ENCODE measurements at regions of chr9 and their contacts with region 1.

Region 1: DNA sequence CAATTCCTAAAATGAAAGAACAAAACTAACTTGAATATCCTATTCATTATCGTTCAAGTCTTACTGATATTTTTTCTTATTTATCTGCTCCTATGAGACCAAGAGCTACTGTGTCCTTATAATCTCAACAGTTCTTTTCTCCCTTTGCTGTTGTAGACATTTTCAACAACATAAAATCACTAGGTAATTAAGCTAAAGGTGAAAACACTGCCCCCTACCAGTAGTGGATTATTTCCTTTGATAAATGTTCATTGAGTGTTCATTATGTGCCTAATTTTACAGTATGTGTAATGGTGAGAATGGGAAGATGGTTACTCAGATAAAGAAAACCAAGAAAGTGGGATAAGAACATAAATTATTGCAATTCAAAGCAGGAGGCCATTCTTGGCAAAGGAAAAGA is 41.4 kb upstream of the PAPPA start:
- DNase-seq: no peak
- ATAC-seq: no peak
- H3K4me3 ChIP-seq: no peak overlapping the region
- H3K27ac ChIP-seq: no peak overlapping the region
- H3K4me1 ChIP-seq: no peaks in the 10 kb centered on the region
- H3K27me3 ChIP-seq: no peaks in the 10 kb centered on the region
- CTCF ChIP-seq: peak in 7 of 9 donors; percentile 5 to 46 (median 30)

Region 2: GRCh38 chr9:115883457-115884329 is 228.5 kb before region 1 on chr9:
- intact Hi-C with region 1: loop called in 8 of 10 experiments (anchors 2 to 10 kb)
- DNase-seq: peak in 1 of 2 donors; percentile 13
- ATAC-seq: peak in 6 of 8 donors; percentile 43 to 81 (median 64)
- H3K4me3 ChIP-seq: no peak overlapping the region
- H3K27ac ChIP-seq: no peak overlapping the region
- H3K4me1 ChIP-seq: no peaks in the 10 kb centered on the region
- H3K27me3 ChIP-seq: no peaks in the 10 kb centered on the region
- CTCF ChIP-seq: peak; percentile 11 to 66 (median 57)

Region 3: GRCh38 chr9:116096853-116097252 is 15.4 kb before region 1 on chr9:
- intact Hi-C with region 1: loop called in 1 of 10 experiments (anchors 1 kb)
- DNase-seq: no peak
- ATAC-seq: no peak
- H3K4me3 ChIP-seq: no peak overlapping the region
- H3K27ac ChIP-seq: no peak overlapping the region
- H3K4me1 ChIP-seq: no peaks in the 10 kb centered on the region
- H3K27me3 ChIP-seq: no peaks in the 10 kb centered on the region
- CTCF ChIP-seq: no peak

Region 4: DNA sequence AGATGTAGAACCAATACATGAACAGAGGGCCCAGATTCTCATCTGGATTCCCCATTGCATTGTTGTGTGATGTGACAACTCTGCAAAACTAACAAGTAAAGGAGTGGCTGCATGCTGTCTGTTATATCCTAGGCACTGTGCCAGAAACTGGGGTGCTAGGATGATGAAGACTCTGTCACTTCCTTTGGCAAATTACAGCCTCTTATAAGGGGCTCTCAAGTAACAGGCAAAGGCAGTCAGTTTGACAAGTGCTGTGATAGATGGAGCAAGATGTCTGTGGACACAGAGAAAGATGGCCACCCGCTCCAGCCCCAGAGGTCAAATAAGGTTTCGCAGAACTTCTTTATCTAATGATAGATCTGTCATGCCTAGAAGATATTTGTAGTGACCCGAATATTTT is 157.0 kb after region 1 on chr9:
- intact Hi-C with region 1: no loop called
- DNase-seq: no peak
- ATAC-seq: no peak
- H3K4me3 ChIP-seq: no peak overlapping the region
- H3K27ac ChIP-seq: no peak overlapping the region
- H3K4me1 ChIP-seq: no peaks in the 10 kb centered on the region
- H3K27me3 ChIP-seq: no peaks in the 10 kb centered on the region
- CTCF ChIP-seq: no peak

Measured in heart right ventricle (tissue), 16 donors.